Activated CD4-positive, alpha-beta memory T cell treated with anti-CD3 and anti-CD28 coated beads for 36 hours (primary cell): ENCODE measurements at regions of chr15 and their contacts with region 1.

Region 1: GRCh38 chr15:90886041-90886614 is 1.8 kb downstream of the FES start:
- DNase-seq: peak; percentile 86
- H3K4me3 Mint-ChIP-seq: peak overlapping the region; percentile 26
- H3K27ac Mint-ChIP-seq: peak overlapping the region; percentile 18
- H3K4me1 Mint-ChIP-seq: peaks cover 20% of the 10 kb centered on the region
- H3K27me3 Mint-ChIP-seq: peaks cover 6% of the 10 kb centered on the region

Region 2: DNA sequence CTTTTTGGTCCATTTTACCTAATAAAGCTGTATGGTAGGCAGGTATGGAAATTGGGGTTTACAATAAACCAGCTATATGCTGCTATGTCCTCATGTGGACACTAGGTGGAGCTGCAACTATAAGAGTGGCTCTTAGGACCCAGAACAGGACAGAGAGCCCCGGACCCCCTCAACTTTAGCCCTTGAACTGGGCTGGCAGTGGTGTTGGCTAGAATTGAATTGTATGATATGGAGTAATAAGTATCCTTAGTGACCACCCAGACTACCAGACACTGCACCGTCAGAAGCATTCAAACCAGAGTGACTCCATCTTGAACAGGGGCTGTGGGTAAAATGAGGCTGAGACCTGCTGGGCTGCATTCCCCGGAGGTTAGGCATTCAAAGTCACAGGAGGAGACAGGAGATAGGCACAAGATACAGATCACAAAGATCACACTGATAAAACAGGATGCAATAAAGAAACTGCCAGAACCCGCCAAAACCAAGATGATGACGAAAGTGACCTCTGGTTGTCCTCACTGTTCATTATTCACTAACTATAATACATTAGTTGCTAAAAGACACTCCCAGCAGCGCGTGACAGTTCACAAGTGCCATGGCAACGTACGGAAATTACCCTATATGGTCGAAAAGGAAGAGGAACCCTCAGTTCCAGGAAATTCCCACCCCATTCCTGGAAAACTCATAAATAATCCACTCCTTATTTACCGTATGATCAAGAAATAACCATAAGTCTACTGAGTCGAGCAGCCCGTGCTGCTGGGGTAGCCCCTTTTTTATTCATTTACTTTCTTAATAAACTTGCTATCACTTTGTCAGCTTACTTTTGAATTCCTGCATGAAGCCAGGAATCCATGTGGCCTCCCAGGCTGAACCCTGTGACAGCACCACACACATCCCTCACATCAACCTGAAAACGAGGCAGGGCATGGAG is 237.7 kb before region 1 on chr15:
- CTCF ChIA-PET with region 1: interaction called, 65 read pairs
- POLR2A ChIA-PET with region 1: interaction called, 3 read pairs
- intact Hi-C with region 1: loop called (anchors 1 kb)
- DNase-seq: peak; percentile 81
- H3K4me3 Mint-ChIP-seq: peak overlapping the region; percentile 53
- H3K27ac Mint-ChIP-seq: peak overlapping the region; percentile 92
- H3K4me1 Mint-ChIP-seq: peaks cover 24% of the 10 kb centered on the region
- H3K27me3 Mint-ChIP-seq: no peaks in the 10 kb centered on the region

Region 3: GRCh38 chr15:90701880-90702630 is 184.1 kb before region 1 on chr15:
- CTCF ChIA-PET with region 1: interaction called, 16 read pairs
- POLR2A ChIA-PET with region 1: no interaction called
- intact Hi-C with region 1: no loop called
- DNase-seq: no peak
- H3K4me3 Mint-ChIP-seq: no peak overlapping the region
- H3K27ac Mint-ChIP-seq: no peak overlapping the region
- H3K4me1 Mint-ChIP-seq: peaks cover 4% of the 10 kb centered on the region
- H3K27me3 Mint-ChIP-seq: no peaks in the 10 kb centered on the region

Region 4: DNA sequence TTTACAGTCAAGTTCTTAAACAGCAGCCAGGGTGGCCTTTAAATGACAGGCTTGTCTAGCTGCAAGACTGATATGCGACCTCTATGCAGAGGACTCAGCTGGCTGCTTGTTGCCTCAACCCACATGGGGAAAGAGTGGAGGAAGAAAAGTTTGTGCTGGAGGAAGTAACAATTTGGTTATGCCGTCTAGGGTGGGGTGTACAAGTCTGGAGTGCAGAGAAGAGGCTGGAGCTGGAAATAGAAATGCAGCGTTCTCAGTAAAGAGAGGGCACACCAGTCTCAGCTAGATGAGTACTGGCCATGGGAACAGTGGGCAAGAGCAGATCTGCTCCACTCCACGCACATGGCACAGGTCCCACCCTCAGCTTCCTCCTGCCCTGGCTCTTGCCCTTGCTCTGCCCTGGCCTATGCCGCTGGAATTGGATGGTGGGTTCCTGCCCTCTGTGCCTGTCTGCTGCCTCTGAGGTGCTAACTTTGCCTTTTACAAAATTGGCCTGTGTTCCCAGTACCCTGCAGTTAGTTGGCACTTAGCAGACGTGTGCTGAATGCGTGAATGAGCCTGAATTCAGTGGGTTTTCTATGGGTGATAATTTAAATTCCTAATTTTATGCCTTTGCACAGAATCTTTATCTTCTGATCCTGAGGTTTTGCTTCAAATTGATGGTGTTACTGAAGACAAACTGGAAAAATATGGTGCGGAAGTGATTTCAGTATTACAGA is 77.5 kb before region 1 on chr15:
- CTCF ChIA-PET with region 1: interaction called, 18 read pairs
- POLR2A ChIA-PET with region 1: no interaction called
- intact Hi-C with region 1: no loop called
- DNase-seq: no peak
- H3K4me3 Mint-ChIP-seq: no peak overlapping the region
- H3K27ac Mint-ChIP-seq: no peak overlapping the region
- H3K4me1 Mint-ChIP-seq: peaks cover 34% of the 10 kb centered on the region
- H3K27me3 Mint-ChIP-seq: no peaks in the 10 kb centered on the region

Region 5: GRCh38 chr15:90869601-90870353 is 16.4 kb before region 1 on chr15:
- CTCF ChIA-PET with region 1: interaction called, 22 read pairs
- POLR2A ChIA-PET with region 1: interaction called, 14 read pairs
- intact Hi-C with region 1: no loop called
- DNase-seq: peak; percentile 81
- H3K4me3 Mint-ChIP-seq: peak overlapping the region; percentile 91
- H3K27ac Mint-ChIP-seq: peak overlapping the region; percentile 97
- H3K4me1 Mint-ChIP-seq: peaks cover 56% of the 10 kb centered on the region
- H3K27me3 Mint-ChIP-seq: no peaks in the 10 kb centered on the region